ENCODE measurements at regions of chr12 and their contacts with region 1.

Region 1: GRCh38 chr12:51980051-51980808 is 26.5 kb upstream of the TAMALIN start:
- DNase-seq: peak; percentile 85
- H3K4me3 ChIP-seq: no peak overlapping the region
- H3K27ac ChIP-seq: no peak overlapping the region
- H3K4me1 ChIP-seq: no peaks in the 10 kb centered on the region
- H3K27me3 ChIP-seq: no peaks in the 10 kb centered on the region
- CTCF ChIP-seq: peak; percentile 74 to 98 (median 92)
- EP300 ChIP-seq: no peak
- POLR2A ChIP-seq: no peak

Region 2: DNA sequence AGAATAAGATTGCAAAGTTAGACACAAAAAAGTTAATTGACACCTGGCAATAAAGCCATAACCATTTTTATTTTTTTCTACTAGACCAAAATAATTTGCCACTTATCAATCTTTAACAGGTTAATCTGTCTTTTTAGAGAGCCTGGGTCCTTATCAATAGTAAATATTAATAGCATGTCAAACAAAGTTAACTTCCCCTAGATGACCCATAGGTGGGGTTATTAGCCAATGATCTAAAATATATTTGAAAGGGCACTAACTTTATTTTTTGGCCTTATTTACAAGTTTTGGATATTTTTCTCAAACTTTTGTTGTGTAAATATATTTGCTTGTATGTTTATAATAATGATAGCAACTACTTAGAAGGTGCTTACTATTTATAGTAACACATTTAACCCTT is 88.4 kb before region 1 on chr12:
- intact Hi-C with region 1: loop called (anchors 5 kb)
- DNase-seq: no peak
- H3K4me3 ChIP-seq: no peak overlapping the region
- H3K27ac ChIP-seq: no peak overlapping the region
- H3K4me1 ChIP-seq: peaks cover 0 to 6% (median 0%) of the 10 kb centered on the region in 4 donors
- H3K27me3 ChIP-seq: peaks cover 0 to 18% (median 15%) of the 10 kb centered on the region in 3 donors
- CTCF ChIP-seq: peak in 1 of 4 experiments; percentile 14
- EP300 ChIP-seq: no peak
- POLR2A ChIP-seq: no peak

Region 3: GRCh38 chr12:51941011-51941581 is 39.1 kb before region 1 on chr12:
- intact Hi-C with region 1: loop called (anchors 5 kb)
- DNase-seq: no peak
- H3K4me3 ChIP-seq: no peak overlapping the region
- H3K27ac ChIP-seq: no peak overlapping the region
- H3K4me1 ChIP-seq: peaks cover 0 to 10% (median 10%) of the 10 kb centered on the region in 4 donors
- H3K27me3 ChIP-seq: peaks cover 0 to 6% (median 0%) of the 10 kb centered on the region in 3 donors
- CTCF ChIP-seq: no peak
- EP300 ChIP-seq: no peak
- POLR2A ChIP-seq: no peak